Activated naive CD4-positive, alpha-beta T cell treated with anti-CD3 and anti-CD28 coated beads for 36 hours (primary cell): ENCODE measurements at regions of chr18 and their contacts with region 1.

Region 1: DNA sequence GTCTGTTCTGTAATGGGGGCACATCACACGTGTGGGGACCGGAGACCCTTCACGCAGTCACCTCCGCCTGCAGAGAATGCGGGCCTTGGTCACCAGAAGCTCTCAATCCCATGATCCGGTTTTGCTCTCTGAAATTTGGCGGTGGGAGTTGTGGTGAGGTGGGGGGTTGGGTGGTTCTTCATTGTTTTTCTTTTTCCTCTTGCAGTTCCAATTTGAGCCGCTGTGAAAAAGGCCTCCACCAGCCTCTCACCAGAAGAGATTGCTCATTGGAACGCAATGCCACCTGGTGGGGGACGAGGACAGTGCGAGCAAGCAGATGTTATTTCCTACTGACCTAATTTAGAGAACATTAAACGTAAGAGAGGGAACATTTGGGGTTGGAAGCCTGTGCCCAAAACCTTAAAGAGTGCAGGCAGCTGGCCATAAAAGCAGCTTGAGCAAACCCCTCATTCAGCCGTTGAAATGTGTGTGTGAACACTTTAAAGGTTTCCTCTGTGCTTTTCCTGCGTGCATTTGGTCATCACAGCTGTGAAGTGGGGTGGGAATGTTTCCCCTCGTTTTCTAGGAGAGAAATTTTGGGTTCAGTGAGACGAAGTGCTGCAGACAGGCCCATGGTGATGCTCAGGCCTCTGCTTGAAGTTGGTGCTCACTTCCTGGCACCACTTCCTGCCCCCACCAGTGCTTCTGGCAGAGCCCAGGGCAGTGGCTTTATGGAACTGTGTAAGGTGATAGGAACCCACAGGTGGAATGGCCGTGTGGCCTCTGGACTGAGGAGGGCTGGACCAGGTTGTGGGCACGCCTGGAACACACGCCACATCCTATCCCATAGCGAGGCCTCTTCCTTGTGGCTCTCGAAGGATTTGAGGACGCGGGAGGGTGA is 61.7 kb downstream of the ZCCHC2 start:
- DNase-seq: peak; percentile 93
- H3K4me3 Mint-ChIP-seq: peak overlapping the region; percentile 2
- H3K27ac Mint-ChIP-seq: peak overlapping the region; percentile 92
- H3K4me1 Mint-ChIP-seq: peaks cover 42% of the 10 kb centered on the region
- H3K27me3 Mint-ChIP-seq: no peaks in the 10 kb centered on the region

Region 2: GRCh38 chr18:61972389-61973264 is 611.9 kb before region 1 on chr18:
- CTCF ChIA-PET with region 1: no interaction called
- intact Hi-C with region 1: loop called (anchors 5 kb)
- DNase-seq: no peak
- H3K4me3 Mint-ChIP-seq: no peak overlapping the region
- H3K27ac Mint-ChIP-seq: no peak overlapping the region
- H3K4me1 Mint-ChIP-seq: peaks cover 16% of the 10 kb centered on the region
- H3K27me3 Mint-ChIP-seq: no peaks in the 10 kb centered on the region

Region 3: DNA sequence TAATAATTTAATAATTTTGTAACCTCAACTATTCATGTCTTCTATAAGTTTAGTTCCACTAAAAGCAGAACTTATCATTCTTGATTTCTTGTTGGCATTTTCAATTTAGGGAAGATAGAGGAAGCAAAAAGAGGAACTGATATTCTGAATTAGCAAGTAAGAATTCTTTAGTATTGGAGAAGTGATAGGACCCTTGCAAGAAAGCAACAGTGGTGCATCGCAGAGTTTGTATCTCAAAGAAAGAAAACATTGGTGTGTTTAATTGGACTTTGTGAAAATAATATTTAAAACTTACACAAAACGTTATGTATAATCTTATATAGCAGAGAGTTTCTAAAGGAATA is 295.8 kb before region 1 on chr18:
- CTCF ChIA-PET with region 1: no interaction called
- intact Hi-C with region 1: loop called (anchors 2 kb)
- DNase-seq: no peak
- H3K4me3 Mint-ChIP-seq: no peak overlapping the region
- H3K27ac Mint-ChIP-seq: no peak overlapping the region
- H3K4me1 Mint-ChIP-seq: peaks cover 32% of the 10 kb centered on the region
- H3K27me3 Mint-ChIP-seq: no peaks in the 10 kb centered on the region

Region 4: DNA sequence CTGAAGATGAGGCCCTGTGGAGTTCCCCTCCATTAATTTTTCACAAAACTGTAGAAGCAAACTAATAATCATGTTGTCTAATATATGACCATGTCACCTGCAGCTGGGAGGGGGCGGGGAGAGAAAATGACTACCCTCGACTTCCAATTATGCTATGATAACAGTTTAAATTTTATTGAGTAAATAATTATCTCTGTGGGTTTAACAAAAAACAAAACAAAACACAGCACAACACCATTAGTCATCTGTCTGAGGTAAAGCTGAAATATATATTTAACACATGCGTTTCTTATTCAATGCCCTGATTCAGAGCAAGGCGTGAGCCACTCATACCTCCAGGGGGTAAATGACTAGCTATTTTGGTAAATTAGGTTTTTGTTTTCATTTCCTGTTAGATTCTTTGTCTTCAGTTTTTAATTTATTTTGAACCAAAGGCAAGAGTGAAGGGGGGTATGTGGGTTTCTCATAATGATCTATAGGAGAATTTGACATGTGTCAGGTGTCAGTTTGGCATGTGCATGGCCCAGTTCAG is 139.0 kb before region 1 on chr18:
- CTCF ChIA-PET with region 1: interaction called, 5 read pairs
- intact Hi-C with region 1: loop called (anchors 1 kb)
- DNase-seq: peak; percentile 18
- H3K4me3 Mint-ChIP-seq: no peak overlapping the region
- H3K27ac Mint-ChIP-seq: no peak overlapping the region
- H3K4me1 Mint-ChIP-seq: no peaks in the 10 kb centered on the region
- H3K27me3 Mint-ChIP-seq: no peaks in the 10 kb centered on the region

Region 5: GRCh38 chr18:62545098-62545497 is 39.4 kb before region 1 on chr18:
- CTCF ChIA-PET with region 1: interaction called, 11 read pairs
- intact Hi-C with region 1: no loop called
- DNase-seq: no peak
- H3K4me3 Mint-ChIP-seq: no peak overlapping the region
- H3K27ac Mint-ChIP-seq: no peak overlapping the region
- H3K4me1 Mint-ChIP-seq: no peaks in the 10 kb centered on the region
- H3K27me3 Mint-ChIP-seq: no peaks in the 10 kb centered on the region

Region 6: DNA sequence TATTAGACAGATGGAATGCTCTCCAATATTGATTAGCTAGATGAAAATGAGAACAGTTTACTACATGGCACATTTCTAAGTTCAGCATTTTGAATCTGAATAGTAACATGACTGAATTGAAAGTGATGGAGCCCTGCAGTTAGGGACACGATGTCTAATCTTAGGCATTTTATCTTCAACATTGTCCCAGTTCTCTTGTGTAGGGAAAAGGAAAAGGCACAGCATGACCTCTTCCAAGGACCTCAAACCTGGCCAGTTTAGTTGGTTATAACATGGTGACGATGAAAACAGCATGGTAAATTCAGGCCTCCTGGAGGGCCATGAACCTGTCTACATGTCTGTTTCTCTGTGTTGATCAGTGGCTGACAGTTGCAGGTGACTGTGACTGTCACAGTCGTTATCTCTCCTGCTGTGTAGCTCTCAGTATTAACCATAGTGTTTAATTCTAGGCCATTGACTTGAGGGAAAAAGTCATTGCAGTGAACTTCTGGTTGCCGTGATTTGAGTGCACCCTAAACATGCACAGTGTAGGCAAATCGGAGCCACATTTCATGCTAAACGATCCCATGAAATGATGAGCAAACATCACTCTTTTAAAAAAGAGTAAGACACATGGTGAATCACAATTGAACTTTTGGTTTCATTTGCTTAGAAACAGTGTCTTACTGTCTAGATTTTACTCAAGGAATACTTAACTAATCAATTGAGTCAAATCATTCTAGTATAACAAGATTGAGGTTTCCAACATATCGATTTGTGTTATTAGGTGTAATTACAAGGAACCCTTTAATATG is 260.6 kb after region 1 on chr18:
- CTCF ChIA-PET with region 1: no interaction called
- intact Hi-C with region 1: loop called (anchors 1 kb)
- DNase-seq: peak; percentile 57
- H3K4me3 Mint-ChIP-seq: no peak overlapping the region
- H3K27ac Mint-ChIP-seq: peak overlapping the region; percentile 24
- H3K4me1 Mint-ChIP-seq: peaks cover 24% of the 10 kb centered on the region
- H3K27me3 Mint-ChIP-seq: no peaks in the 10 kb centered on the region

Region 7: GRCh38 chr18:63161761-63162195 is 577.3 kb after region 1 on chr18:
- CTCF ChIA-PET with region 1: no interaction called
- intact Hi-C with region 1: loop called (anchors 1 kb)
- DNase-seq: peak; percentile 94
- H3K4me3 Mint-ChIP-seq: peak overlapping the region; percentile 74
- H3K27ac Mint-ChIP-seq: peak overlapping the region; percentile 99
- H3K4me1 Mint-ChIP-seq: peaks cover 93% of the 10 kb centered on the region
- H3K27me3 Mint-ChIP-seq: no peaks in the 10 kb centered on the region

Region 8: GRCh38 chr18:63292831-63293683 is 708.6 kb after region 1 on chr18:
- CTCF ChIA-PET with region 1: no interaction called
- intact Hi-C with region 1: no loop called
- DNase-seq: peak; percentile 41
- H3K4me3 Mint-ChIP-seq: peak overlapping the region; percentile 12
- H3K27ac Mint-ChIP-seq: peak overlapping the region; percentile 55
- H3K4me1 Mint-ChIP-seq: peaks cover 10% of the 10 kb centered on the region
- H3K27me3 Mint-ChIP-seq: no peaks in the 10 kb centered on the region